Left lung (tissue), 14 donors: ENCODE measurements at regions of chr7 and their contacts with region 1.

Region 1: GRCh38 chr7:2209146-2209960 is 23.4 kb downstream of the MAD1L1 start:
- DNase-seq: peak; percentile 54 to 83 (median 74)
- ATAC-seq: peak; percentile 91
- H3K4me3 ChIP-seq: no peak overlapping the region
- H3K27ac ChIP-seq: no peak overlapping the region
- H3K4me1 ChIP-seq: no peaks in the 10 kb centered on the region
- H3K27me3 ChIP-seq: no peaks in the 10 kb centered on the region
- CTCF ChIP-seq: peak; percentile 60 to 69

Region 2: DNA sequence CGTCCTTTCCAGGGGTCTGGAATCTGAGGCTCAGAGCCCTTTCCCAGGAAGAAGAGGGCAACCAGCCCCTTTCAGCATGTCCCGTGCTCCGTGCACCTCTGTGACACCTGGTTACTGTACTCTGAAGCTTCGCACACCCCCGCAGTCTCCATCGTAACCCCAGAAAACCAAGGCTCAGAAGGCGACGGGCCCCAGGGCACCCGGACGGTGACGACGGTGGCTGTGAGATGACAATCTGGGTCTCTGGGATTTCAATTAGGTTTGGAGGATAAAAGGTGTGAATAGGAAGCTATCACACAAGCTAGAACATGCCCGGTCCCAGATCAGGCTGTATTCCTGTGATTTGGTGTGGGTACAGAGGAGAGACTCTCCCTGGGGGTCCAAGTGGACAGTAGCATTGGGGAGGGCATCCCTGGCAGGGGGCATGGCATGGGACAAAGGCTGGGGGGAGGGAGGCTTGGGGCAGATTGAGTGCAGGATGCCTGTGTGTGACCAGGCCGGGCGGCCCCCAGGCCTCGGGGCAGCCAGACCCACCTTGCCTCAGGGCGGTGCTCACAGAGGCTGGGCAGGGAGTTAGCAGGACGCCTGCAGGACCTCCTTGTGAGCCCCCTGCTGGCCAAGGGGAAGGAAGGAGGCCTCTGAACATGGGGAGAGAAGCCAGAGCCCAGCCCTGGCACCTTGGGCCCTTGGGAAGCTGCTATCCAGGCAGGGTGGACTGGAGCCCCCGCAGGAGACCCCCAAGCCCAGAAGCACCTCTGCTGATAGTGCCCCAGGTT is 616.1 kb before region 1 on chr7:
- intact Hi-C with region 1: loop called in 1 of 2 experiments (anchors 10 kb)
- DNase-seq: no peak
- ATAC-seq: no peak
- H3K4me3 ChIP-seq: no peak overlapping the region
- H3K27ac ChIP-seq: no peak overlapping the region
- H3K4me1 ChIP-seq: no peaks in the 10 kb centered on the region
- H3K27me3 ChIP-seq: peaks cover 8 to 76% of the 10 kb centered on the region in 2 donors
- CTCF ChIP-seq: peak in 1 of 2 donors; percentile 11

Region 3: DNA sequence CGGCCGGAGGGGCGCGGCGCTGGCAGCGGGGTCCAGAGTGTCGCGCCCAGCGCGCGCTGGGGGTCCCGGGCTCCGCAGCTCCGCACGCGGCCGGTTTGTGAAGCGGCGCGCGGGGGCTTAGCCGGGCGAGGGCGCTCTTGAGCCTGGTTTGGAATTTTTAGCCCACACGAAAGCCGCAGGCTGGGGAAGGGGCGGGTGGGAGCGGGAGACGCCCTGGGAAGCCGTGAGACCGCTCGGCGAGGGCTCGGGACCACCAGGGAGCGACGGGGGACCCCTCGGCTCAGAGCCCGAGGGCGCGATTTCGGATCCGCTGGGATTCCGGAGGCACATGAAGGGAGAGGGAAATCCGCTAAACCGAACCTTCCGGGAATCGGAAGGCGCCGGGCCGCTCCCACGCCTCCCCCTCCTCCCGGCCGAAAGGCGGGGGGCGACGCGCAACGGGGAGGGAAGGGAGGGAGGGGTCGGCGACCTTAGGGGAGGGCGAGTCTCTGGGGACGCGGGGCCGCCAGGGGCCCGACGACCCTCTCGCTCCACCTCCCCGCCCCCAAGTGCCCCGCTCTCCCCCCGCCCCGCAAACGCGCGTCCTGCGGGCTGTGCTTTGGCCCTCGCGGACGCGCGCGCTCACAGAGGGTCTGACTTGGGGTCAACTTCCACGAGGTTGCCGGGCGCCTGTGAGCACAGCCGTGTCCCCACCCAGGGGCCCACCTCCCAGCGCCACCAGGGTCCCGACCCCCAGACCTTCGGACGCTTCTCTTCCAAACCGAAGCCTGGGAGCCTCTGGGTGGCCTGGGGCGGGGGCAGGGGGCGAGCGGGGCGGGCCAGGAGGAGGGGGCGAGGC is 544.4 kb before region 1 on chr7:
- intact Hi-C with region 1: loop called in 1 of 2 experiments (anchors 10 kb)
- DNase-seq: peak; percentile 55 to 85 (median 80)
- ATAC-seq: peak; percentile 58
- H3K4me3 ChIP-seq: peak overlapping the region; percentile 42 to 48
- H3K27ac ChIP-seq: peak overlapping the region in 1 of 2 donors; percentile 23
- H3K4me1 ChIP-seq: peaks cover 23 to 54% of the 10 kb centered on the region in 2 donors
- H3K27me3 ChIP-seq: peaks cover 47 to 98% of the 10 kb centered on the region in 2 donors
- CTCF ChIP-seq: peak; percentile 49 to 58

Region 4: GRCh38 chr7:2072042-2072441 is 137.3 kb before region 1 on chr7:
- intact Hi-C with region 1: no loop called
- DNase-seq: no peak
- ATAC-seq: no peak
- H3K4me3 ChIP-seq: no peak overlapping the region
- H3K27ac ChIP-seq: no peak overlapping the region
- H3K4me1 ChIP-seq: no peaks in the 10 kb centered on the region
- H3K27me3 ChIP-seq: no peaks in the 10 kb centered on the region
- CTCF ChIP-seq: no peak